Panc1 (cell line): ENCODE measurements at regions of chr13 and their contacts with region 1.

Region 1: GRCh38 chr13:26663791-26664190 is 96.8 kb downstream of the GPR12 start:
- DNase-seq: no peak
- ATAC-seq: no peak
- H3K4me3 ChIP-seq: no peak overlapping the region
- H3K27ac ChIP-seq: no peak overlapping the region
- H3K4me1 ChIP-seq: no peaks in the 10 kb centered on the region
- H3K27me3 ChIP-seq: no peaks in the 10 kb centered on the region
- CTCF ChIP-seq: no peak

Region 2: DNA sequence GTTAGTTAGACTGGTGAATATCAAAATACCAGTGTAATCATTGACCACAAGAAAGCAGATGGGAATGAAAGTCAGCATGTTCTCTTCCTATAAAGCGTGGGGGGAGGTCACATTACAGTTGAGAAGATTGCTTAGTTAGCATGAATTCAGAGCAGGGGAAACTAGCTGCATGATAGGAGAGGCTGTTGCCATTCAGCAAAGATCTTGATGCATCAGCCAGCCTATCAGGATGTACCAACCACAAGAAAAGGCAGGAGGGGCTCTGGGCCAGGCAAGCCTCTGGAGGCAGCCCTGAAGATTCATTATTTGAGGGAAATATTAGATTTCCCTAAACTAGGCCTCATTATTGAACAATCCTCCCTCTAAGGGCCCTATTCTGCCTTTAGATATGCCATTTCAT is 1371.5 kb before region 1 on chr13:
- CTCF ChIA-PET with region 1: no interaction called
- POLR2A ChIA-PET with region 1: interaction called, 10 read pairs
- in situ Hi-C with region 1: no loop called
- intact Hi-C with region 1: no loop called
- DNase-seq: no peak
- ATAC-seq: no peak
- H3K4me3 ChIP-seq: no peak overlapping the region
- H3K27ac ChIP-seq: no peak overlapping the region
- H3K4me1 ChIP-seq: no peaks in the 10 kb centered on the region
- H3K27me3 ChIP-seq: no peaks in the 10 kb centered on the region
- CTCF ChIP-seq: no peak

Region 3: GRCh38 chr13:25707726-25708125 is 956.1 kb before region 1 on chr13:
- CTCF ChIA-PET with region 1: no interaction called
- POLR2A ChIA-PET with region 1: no interaction called
- in situ Hi-C with region 1: no loop called
- intact Hi-C with region 1: no loop called
- DNase-seq: no peak
- ATAC-seq: no peak
- H3K4me3 ChIP-seq: no peak overlapping the region
- H3K27ac ChIP-seq: no peak overlapping the region
- H3K4me1 ChIP-seq: no peaks in the 10 kb centered on the region
- H3K27me3 ChIP-seq: no peaks in the 10 kb centered on the region; the same call in 1 of the 2 replicates
- CTCF ChIP-seq: no peak